ENCODE measurements at regions of chr20 and their contacts with region 1.

Region 1: GRCh38 chr20:46757754-46758678 is 48.6 kb downstream of the SLC2A10 start:
- DNase-seq: peak; percentile 79
- ATAC-seq: peak; percentile 54
- H3K4me3 ChIP-seq: no peak overlapping the region
- H3K27ac ChIP-seq: no peak overlapping the region
- H3K4me1 ChIP-seq: 0 out of 2 replicates have a peak, but pooled peaks cover under 1% of the 10 kb centered on the region
- H3K27me3 ChIP-seq: 0 out of 2 replicates have a peak, but pooled peaks cover 1% of the 10 kb centered on the region
- CTCF ChIP-seq: peak; percentile 98

Region 2: GRCh38 chr20:46715292-46715756 is 42.7 kb before region 1 on chr20:
- CTCF ChIA-PET with region 1: no interaction called
- POLR2A ChIA-PET with region 1: no interaction called
- intact Hi-C with region 1: no loop called
- DNase-seq: peak; percentile 86
- ATAC-seq: peak; percentile 98
- H3K4me3 ChIP-seq: peak overlapping the region; percentile 10; the same call in 1 of the 2 replicates
- H3K27ac ChIP-seq: peak overlapping the region; percentile 22
- H3K4me1 ChIP-seq: peaks cover 20% of the 10 kb centered on the region
- H3K27me3 ChIP-seq: no peaks in the 10 kb centered on the region
- CTCF ChIP-seq: no peak; the same call in 1 of the 2 replicates

Region 3: DNA sequence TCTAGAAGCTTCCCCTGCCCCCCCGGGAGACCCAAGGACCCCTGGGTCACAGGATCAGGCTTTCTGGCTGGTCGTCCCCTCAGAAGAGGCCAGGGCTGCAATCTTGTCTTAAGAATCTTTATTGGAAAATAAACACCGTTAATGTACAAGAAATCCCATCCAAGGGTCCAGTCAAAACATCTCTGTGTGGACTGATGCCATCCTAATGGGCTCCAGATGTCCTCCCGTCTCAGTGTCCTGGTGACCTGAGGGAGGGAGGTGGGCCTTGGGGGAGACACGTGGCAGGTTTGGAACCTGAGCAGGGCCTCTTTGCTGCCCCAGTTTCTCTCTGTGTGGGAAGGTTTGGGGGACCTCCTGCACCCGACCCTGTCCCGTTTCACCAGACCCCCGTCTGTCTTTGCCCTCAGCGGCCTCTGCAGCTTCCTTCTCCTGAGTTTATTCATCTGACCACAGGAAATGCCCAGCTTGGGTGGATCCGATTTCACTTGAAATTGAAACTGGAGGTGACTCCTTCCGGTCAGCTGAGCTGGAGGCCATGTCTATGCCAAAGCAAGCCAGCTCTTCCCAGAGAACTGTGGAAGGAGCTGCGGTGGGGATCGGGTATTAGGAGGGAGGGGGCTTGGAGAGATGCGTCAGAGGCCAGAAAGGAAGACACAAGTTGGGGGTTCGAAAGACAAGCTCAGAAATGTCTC is 26.6 kb after region 1 on chr20:
- CTCF ChIA-PET with region 1: interaction called, 10 read pairs
- POLR2A ChIA-PET with region 1: no interaction called
- intact Hi-C with region 1: no loop called
- DNase-seq: peak; percentile 32
- ATAC-seq: no peak
- H3K4me3 ChIP-seq: no peak overlapping the region
- H3K27ac ChIP-seq: no peak overlapping the region
- H3K4me1 ChIP-seq: peaks cover 4% of the 10 kb centered on the region; the same call in 1 of the 2 replicates
- H3K27me3 ChIP-seq: peaks cover 15% of the 10 kb centered on the region; the same call in 1 of the 2 replicates
- CTCF ChIP-seq: no peak

Region 4: GRCh38 chr20:46959081-46959692 is 201.2 kb after region 1 on chr20:
- CTCF ChIA-PET with region 1: no interaction called
- POLR2A ChIA-PET with region 1: no interaction called
- intact Hi-C with region 1: loop called (anchors 10 kb)
- DNase-seq: peak; percentile 99
- ATAC-seq: peak; percentile 93
- H3K4me3 ChIP-seq: peak overlapping the region; percentile 53; the same call in 1 of the 2 replicates
- H3K27ac ChIP-seq: peak overlapping the region; percentile 92
- H3K4me1 ChIP-seq: peaks cover 55% of the 10 kb centered on the region
- H3K27me3 ChIP-seq: no peaks in the 10 kb centered on the region
- CTCF ChIP-seq: no peak

Region 5: DNA sequence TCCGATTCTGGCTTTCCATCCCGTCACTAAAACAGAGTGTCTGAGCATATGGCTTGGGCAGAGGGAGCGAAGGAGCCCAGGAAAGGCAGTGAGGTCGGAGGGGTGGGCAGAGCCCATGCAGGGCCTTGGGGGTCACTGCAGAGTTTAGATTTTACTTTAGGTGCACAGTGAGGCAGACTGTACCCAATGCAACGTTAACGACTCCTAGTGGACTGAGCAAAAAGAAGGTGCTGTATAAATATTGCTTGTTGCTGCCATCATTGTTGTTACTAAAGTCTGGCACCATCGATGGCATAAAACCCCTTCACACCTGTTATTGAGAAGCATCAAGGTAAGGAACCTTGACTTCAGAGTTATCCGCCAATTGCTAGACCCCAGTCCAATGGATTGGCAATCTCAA is 255.6 kb after region 1 on chr20:
- CTCF ChIA-PET with region 1: no interaction called
- POLR2A ChIA-PET with region 1: no interaction called
- intact Hi-C with region 1: loop called (anchors 5 kb)
- DNase-seq: peak; percentile 17
- ATAC-seq: no peak
- H3K4me3 ChIP-seq: no peak overlapping the region
- H3K27ac ChIP-seq: no peak overlapping the region
- H3K4me1 ChIP-seq: no peaks in the 10 kb centered on the region
- H3K27me3 ChIP-seq: peaks cover 36% of the 10 kb centered on the region
- CTCF ChIP-seq: peak; percentile 55

Region 6: DNA sequence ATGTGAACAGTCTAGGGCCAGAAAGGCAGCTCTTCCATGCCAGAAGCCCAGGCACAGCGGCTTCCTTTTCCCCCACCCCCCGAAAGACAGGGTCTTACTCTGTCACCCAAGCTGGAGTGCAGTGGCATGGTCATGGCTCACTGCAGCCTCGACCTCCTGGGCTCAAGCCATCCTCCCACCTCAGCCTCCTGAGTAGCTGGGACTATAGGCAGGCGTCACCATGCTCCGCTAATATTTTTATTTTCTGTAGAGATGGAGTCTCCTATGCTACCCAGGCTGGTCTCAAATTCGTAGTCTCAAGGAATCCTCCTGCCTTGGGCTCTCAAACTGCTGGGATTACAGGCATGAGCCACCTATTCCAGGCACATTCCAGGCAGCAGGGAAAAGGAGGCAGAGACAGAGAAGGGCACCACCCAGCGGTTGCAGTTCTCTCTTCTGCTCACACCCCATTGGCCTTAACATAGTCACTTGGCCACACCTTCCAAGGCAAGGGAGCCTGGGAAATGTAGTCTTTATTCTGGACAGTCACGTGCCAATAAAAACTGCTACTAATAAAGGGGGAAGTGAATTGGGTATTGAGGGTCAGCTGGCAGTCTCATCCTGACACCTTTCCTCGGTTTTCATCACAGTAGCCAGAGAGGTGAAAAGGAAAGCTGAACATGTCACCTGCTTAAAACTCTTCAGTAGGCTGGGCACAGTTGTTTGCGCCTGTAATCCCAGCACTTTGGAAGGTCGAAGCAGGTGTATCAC is 392.6 kb after region 1 on chr20:
- CTCF ChIA-PET with region 1: no interaction called
- POLR2A ChIA-PET with region 1: no interaction called
- intact Hi-C with region 1: loop called (anchors 2 kb)
- DNase-seq: peak; percentile 82
- ATAC-seq: peak; percentile 97
- H3K4me3 ChIP-seq: no peak overlapping the region
- H3K27ac ChIP-seq: no peak overlapping the region
- H3K4me1 ChIP-seq: peaks cover 13% of the 10 kb centered on the region
- H3K27me3 ChIP-seq: no peaks in the 10 kb centered on the region
- CTCF ChIP-seq: peak; percentile 85